Lower leg skin (tissue), 4 donors: ENCODE measurements at regions of chr3 and their contacts with region 1.

Region 1: DNA sequence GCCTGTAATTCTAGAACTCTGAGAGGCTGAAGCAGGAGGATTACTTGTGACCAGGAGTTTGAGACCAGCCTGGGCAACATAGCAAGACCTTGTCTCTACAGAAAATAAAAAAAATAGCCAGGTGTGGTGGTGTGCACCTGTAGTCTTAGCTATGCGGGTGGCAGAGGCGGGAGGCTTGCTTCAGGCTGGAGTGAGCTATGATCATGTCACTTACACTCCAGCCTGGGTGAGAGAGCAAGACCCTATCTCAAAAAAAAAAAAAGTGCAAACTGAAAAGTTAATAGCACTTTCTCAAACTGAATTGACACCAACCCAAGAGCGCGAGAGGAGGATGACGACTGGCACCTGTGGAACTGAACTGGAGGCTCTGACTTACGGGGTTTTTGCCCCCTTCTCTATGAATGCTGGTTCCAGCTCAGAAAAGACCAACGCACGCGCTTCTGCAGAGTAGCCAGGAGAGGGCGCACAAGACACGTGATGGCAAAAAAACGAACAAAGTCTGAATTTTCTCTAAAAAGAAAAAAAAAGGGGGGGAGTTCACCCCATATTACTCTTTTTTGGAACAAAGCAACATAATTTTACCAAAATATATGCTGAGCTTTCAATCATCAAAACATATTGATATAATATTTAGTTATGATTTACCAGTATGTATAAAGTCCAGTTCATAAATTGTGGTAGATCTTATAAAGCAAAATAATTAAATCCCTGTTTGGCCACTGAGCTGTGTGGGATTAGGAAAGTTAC is 23.7 kb downstream of the CFAP92 start:
- DNase-seq: no peak
- H3K4me3 ChIP-seq: no peak overlapping the region
- CTCF ChIP-seq: peak in 1 of 3 donors; percentile 87
- POLR2A ChIP-seq: no peak

Region 2: DNA sequence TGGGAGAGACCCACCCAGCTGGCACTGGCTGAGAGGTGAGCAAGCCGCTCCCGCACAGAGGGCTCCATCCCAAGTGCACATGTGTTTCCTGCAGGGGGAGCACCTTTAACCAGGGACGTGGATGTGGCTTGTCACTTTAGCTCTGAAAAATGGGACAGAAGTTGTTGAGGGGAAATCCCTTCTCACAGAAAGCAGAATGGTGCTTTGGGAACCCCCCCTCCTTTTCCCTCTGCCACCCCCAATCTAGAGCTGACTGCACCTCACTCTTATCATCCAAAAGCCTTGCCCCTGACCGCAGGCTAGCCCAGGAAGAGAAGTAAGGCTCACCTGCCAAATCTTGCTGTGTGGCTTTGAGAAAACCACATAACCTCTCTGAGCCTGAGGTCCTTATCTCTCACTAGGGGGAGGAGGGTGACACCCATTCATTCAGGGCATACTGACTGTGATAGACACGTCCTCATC is 397.5 kb before region 1 on chr3:
- intact Hi-C with region 1: no loop called
- DNase-seq: no peak
- H3K4me3 ChIP-seq: no peak overlapping the region
- CTCF ChIP-seq: no peak
- POLR2A ChIP-seq: no peak

Region 3: DNA sequence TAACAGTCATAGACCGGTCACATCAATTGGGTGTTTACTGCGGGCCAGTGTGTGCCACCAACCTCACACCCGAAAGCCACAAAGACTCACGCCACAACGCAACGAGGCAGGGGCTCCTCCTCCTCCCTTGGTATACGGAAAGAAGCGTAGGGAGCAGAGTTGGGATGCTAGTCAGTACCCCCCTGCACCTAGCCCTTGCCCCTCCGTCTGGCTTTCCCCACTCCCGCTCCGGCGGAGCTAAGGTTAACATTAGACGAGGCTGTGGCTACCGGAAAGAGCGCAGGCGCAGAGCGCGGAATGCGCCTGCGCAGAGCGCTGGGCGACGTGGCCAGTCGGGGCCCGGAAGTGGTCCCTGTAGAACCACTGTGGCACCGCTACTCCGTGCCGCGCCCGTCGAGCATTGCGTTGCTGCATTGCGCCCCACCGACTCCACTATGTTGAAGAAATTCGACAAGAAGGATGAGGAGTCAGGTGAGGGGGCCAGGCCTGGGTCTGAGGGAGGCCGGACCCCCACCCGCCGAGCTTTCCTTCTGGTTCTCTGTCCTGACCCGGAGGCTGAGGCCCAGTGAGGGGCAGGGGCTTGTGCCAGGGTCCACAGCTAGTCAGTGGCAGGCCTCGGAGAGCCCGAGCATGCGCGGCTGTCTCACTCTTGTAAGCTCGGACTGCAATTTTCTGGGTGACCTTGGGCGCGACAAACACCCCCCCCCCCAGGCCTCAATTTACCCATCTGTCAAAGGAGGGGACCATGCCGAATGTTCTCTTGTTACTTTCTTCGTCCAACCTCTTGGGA is 279.3 kb after region 1 on chr3 and contains the start of gene COPG1:
- intact Hi-C with region 1: loop called (anchors 10 kb)
- DNase-seq: peak; percentile 79 to 96
- H3K4me3 ChIP-seq: peak within 1 kb of the TSS; percentile 98
- CTCF ChIP-seq: no peak
- POLR2A ChIP-seq: peak in 1 of 2 donors; percentile 84
- total RNA-seq, gene COPG1: 69.2 to 95.2 (median 79.8) TPM